Activated naive CD4-positive, alpha-beta T cell treated with anti-CD3 and anti-CD28 coated beads for 36 hours (primary cell): ENCODE measurements at regions of chr7 and their contacts with region 1.

Region 1: GRCh38 chr7:3042861-3043489 is 692 bp downstream of the CARD11 start:
- DNase-seq: peak; percentile 90
- H3K4me3 Mint-ChIP-seq: peak overlapping the region; percentile 99
- H3K27ac Mint-ChIP-seq: peak overlapping the region; percentile 99
- H3K4me1 Mint-ChIP-seq: peaks cover 51% of the 10 kb centered on the region
- H3K27me3 Mint-ChIP-seq: no peaks in the 10 kb centered on the region

Region 2: DNA sequence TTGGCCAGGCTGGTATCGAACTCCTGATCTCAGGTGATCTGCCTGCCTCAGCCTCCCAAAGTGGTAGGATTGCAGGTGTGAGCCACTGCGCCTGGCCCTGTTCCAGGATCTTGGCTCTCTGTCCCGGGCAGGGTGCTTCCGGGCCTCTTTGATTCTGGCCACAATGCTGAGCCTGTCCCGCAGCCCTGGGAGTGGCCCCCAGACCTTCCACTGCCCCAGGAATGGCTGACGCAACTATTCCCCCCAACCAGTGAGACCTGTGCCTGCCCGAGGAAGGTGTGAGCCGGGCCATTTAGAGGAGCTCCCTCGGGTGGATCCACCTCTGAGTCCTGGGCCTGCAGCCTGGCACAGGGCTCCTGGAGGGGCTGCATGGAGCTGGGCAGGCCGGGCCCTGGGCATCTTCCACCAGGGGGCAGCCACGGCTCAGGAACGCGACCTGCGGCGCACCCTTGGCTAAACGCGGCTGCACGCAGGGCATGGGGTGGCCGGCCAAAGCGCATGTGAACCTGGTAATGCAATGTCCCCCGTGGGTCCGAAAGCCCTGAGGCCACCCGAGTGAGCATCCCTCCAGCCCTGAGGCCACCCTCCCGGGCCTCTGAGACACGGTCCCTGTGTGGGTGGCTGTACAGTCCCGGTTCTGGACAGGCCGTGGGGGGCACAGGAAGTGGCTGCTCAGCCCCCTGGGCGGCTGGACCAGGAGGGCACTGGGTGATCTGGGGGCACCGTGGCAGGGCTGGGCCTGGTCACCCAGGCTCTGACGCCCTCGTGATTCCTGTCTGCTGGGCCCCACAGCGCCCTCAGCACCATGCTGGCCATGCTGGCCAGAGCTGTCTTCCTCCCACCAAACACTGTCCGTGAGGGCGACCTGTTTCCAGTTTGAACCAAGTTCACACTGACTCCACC is 591.6 kb before region 1 on chr7:
- CTCF ChIA-PET with region 1: no interaction called
- intact Hi-C with region 1: no loop called
- DNase-seq: peak; percentile 88
- H3K4me3 Mint-ChIP-seq: no peak overlapping the region
- H3K27ac Mint-ChIP-seq: no peak overlapping the region
- H3K4me1 Mint-ChIP-seq: peaks cover 6% of the 10 kb centered on the region
- H3K27me3 Mint-ChIP-seq: no peaks in the 10 kb centered on the region

Region 3: GRCh38 chr7:2870471-2870931 is 172.5 kb before region 1 on chr7:
- CTCF ChIA-PET with region 1: interaction called, 4 read pairs
- intact Hi-C with region 1: loop called (anchors 2 kb)
- DNase-seq: peak; percentile 94
- H3K4me3 Mint-ChIP-seq: peak overlapping the region; percentile 61
- H3K27ac Mint-ChIP-seq: peak overlapping the region; percentile 72
- H3K4me1 Mint-ChIP-seq: peaks cover 57% of the 10 kb centered on the region
- H3K27me3 Mint-ChIP-seq: no peaks in the 10 kb centered on the region

Region 4: DNA sequence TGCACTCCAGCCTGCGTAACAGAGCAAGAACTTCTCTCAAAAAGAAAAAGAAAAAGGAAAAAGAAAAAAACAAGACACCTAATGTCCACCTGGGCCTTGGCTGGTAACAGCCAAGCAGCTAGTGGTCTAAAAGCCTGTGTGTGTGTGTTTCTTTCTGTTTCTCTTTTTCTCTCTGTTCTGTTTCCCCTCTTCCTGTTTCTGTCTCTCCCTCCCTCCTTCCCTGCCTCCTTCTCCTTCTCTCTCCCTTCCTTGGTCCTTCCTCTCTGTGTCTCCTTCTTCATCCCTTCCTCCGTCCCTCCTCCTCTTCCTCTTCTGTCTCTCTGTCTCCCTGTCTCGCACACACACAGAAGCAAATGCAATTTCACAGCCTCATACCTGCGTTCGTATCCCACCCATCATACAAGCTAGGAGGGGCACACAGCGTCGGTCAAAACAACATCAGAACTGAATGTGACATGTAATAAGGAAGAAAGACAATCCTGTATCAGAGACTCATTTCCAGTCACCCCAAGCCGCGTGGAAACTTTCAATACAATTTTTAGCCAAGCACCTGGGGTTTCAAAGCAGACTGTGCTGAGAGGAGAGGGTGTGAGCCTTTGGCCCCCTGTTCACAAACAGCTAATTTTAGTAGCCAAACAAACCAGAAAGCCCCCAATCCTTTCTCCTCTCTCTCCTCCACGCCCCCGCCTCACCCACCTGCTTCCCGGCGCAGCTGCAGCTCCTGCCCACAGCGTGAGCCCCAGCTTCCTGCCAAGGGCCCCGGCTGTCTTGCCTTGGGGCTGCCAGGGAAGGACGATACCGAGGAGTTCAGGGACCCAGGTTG is 148.6 kb before region 1 on chr7:
- CTCF ChIA-PET with region 1: no interaction called
- intact Hi-C with region 1: loop called (anchors 1 kb)
- DNase-seq: peak; percentile 83
- H3K4me3 Mint-ChIP-seq: peak overlapping the region; percentile 73
- H3K27ac Mint-ChIP-seq: peak overlapping the region; percentile 96
- H3K4me1 Mint-ChIP-seq: peaks cover 24% of the 10 kb centered on the region
- H3K27me3 Mint-ChIP-seq: no peaks in the 10 kb centered on the region

Region 5: DNA sequence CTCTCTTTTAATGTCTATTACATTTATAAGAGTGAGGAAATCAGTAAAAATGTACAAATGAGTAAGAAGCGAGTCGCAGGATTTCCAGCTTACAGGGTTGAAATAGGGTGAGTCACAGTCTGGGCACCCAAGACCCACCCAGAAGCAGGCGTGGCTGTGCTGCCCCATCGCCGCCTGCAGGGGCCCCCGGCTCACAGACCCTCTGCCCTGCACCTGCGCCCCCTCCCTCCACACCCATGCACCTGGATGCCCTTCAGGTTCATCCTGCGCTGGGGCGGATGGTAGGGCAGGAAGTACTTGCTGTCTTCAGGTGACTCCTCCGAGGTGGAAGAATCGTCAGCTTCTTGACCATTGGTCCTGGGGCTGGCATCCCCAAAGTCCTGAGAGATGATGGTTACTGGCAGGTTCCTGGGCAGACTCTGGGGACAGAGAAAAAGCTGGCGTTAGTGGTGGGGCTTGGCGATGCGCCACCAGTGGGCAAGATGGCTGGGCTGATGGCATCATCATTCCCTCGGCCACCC is 108.7 kb before region 1 on chr7:
- CTCF ChIA-PET with region 1: interaction called, 6 read pairs
- intact Hi-C with region 1: loop called (anchors 1 kb)
- DNase-seq: peak; percentile 72
- H3K4me3 Mint-ChIP-seq: no peak overlapping the region
- H3K27ac Mint-ChIP-seq: peak overlapping the region; percentile 99
- H3K4me1 Mint-ChIP-seq: peaks cover 19% of the 10 kb centered on the region
- H3K27me3 Mint-ChIP-seq: no peaks in the 10 kb centered on the region

Region 6: DNA sequence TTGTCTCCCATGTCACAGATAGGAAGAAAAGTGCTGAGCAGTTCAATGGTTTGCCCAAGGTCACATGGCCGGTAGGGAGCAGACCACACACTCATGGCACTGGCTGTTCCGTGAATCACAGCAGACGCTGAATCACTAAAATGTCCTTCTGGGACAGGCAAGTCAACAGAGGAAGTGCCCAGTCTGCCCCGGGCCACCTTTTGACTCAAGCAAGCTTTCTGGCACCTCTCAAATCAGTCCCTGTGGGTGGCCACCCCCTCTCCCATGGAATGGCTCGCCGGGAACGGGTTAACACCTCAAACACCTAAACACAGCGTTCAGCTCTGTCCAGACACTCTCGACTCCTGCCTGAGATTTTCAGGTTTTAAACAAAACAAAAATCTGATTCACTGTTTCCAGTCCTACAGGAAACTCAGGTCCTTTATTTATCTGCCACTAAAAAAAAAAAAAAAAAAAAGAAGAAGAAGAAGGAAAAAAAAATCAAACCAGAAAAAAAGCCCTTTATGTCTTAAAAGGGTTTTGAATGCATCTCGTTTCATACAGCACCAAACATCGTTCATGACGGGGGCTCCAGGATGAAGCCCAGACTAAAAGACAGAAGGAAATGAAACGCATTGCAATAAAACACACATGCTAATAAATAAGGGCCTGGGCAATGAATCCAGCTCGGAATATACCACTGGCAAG is 14.8 kb before region 1 on chr7:
- CTCF ChIA-PET with region 1: interaction called, 3 read pairs
- intact Hi-C with region 1: loop called (anchors 1 kb)
- DNase-seq: peak; percentile 88
- H3K4me3 Mint-ChIP-seq: peak overlapping the region; percentile 65
- H3K27ac Mint-ChIP-seq: peak overlapping the region; percentile 92
- H3K4me1 Mint-ChIP-seq: peaks cover 57% of the 10 kb centered on the region
- H3K27me3 Mint-ChIP-seq: no peaks in the 10 kb centered on the region

Region 7: DNA sequence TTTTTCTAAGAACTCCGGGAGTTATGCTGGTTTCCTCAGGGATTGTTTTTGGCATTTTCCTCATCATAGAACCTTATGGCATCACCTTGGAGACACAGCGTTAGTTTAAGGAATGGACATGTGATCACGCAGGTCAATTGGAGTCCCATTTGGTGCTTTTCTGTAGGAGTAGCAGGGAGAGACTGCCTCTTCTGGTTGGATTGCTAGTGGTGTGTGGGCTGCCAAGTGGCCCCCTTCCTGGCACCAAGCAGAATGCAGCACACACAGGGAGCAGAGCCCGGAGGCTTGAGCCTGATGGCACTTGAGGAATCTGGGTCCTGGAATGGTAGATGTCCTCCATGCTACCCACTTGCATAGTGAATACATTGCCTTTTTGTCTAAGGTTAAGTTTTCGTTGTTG is 316.0 kb after region 1 on chr7:
- CTCF ChIA-PET with region 1: no interaction called
- intact Hi-C with region 1: no loop called
- DNase-seq: no peak
- H3K4me3 Mint-ChIP-seq: no peak overlapping the region
- H3K27ac Mint-ChIP-seq: no peak overlapping the region
- H3K4me1 Mint-ChIP-seq: no peaks in the 10 kb centered on the region
- H3K27me3 Mint-ChIP-seq: no peaks in the 10 kb centered on the region